ENCODE measurements at regions of chr2 and their contacts with region 1.

Region 1: GRCh38 chr2:17879101-17879912 is 840 bp downstream of the KCNS3 start:
- DNase-seq: peak; percentile 86
- H3K4me3 Mint-ChIP-seq: peak overlapping the region; percentile 78
- H3K27ac Mint-ChIP-seq: no peak overlapping the region
- H3K4me1 Mint-ChIP-seq: no peaks in the 10 kb centered on the region
- H3K27me3 Mint-ChIP-seq: peaks cover 31% of the 10 kb centered on the region
- CTCF ChIP-seq: no peak

Region 2: GRCh38 chr2:18117592-18117991 is 238.3 kb after region 1 on chr2:
- CTCF ChIA-PET with region 1: interaction called, 7 read pairs
- POLR2A ChIA-PET with region 1: no interaction called
- intact Hi-C with region 1: loop called (anchors 1 kb)
- DNase-seq: peak; percentile 72
- H3K4me3 Mint-ChIP-seq: no peak overlapping the region
- H3K27ac Mint-ChIP-seq: no peak overlapping the region
- H3K4me1 Mint-ChIP-seq: no peaks in the 10 kb centered on the region
- H3K27me3 Mint-ChIP-seq: peaks cover 34% of the 10 kb centered on the region
- CTCF ChIP-seq: peak; percentile 92

Region 3: DNA sequence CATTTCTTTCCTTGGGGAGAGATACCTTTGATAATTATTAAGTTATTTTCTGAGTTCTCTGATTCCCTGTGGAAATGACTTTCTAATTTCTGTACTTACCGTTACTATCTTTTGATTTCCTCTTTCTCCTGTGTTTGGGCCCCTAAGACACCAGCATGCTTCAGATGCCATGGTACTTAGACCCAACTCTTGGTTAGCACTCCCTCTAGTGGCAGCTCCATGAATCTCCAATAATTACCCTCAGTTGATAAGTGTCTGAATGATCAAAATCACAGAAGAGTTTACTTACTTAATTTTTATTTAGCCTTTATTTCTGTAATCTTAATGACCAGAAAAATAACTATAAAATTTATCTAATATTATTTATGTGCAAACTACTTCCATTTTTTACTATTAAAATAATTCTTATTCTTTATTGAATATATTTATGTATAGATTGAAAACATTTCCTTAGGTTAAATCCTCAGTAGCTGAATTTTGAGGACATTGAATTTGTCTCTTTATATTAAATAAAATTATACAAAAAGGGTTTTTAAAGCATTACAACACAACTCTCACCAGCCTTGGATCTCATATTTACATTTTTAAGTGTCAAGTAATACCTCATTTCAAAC is 299.5 kb after region 1 on chr2:
- CTCF ChIA-PET with region 1: interaction called, 18 read pairs
- POLR2A ChIA-PET with region 1: no interaction called
- intact Hi-C with region 1: no loop called
- DNase-seq: peak; percentile 74
- H3K4me3 Mint-ChIP-seq: no peak overlapping the region
- H3K27ac Mint-ChIP-seq: no peak overlapping the region
- H3K4me1 Mint-ChIP-seq: no peaks in the 10 kb centered on the region
- H3K27me3 Mint-ChIP-seq: peaks cover 11% of the 10 kb centered on the region
- CTCF ChIP-seq: peak; percentile 77

Region 4: DNA sequence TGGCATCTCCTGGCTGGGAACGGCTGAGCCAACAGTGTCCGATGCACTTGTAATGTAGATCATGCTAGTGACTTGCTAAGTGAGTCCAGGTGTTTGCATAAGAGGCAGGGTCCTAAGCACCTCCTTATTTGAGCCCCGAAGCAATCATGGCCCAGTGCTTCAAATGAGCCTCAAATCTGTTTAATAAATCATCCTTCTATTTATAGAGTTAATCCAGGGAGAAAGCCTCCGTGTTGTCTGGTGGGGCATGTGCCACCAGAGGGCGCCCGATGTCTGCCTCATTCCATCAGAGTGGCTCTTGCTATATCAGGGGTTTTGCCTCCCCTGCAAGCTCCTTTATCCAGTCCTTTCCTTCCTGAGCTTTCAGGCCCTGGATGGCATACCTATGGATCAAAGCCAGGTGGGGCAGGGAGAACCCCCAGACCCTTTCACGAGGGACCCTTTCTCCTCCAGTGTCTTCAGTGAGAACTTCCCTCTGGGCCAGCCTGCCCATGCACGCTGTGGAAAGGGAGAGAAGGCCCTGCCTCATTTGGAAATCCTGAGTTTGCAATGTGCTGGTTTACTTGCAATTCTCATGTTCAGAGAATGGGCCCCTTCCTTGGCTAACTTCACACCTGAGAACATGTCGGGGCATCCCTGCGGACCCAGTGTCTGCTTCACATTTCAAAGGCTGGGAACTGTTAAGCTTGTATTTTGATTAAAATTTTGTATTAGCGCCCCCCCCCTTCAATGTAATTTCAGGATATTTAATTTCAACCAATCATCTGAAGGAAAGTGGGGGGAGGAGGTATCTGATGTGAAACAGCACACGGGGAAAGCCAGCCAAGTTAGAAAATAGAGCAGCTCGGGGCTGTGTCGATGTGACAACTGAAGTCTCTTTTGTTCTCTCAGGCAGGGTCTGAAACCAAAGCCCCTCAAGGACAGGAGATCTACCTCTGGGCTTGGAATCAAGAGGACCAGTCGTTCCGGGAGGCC is 641.4 kb after region 1 on chr2:
- CTCF ChIA-PET with region 1: no interaction called
- POLR2A ChIA-PET with region 1: no interaction called
- intact Hi-C with region 1: no loop called
- DNase-seq: peak; percentile 78
- H3K4me3 Mint-ChIP-seq: no peak overlapping the region
- H3K27ac Mint-ChIP-seq: no peak overlapping the region
- H3K4me1 Mint-ChIP-seq: no peaks in the 10 kb centered on the region
- H3K27me3 Mint-ChIP-seq: no peaks in the 10 kb centered on the region
- CTCF ChIP-seq: peak; percentile 95